HepG2 (cell line): ENCODE measurements at regions of chr18 and their contacts with region 1.

Region 1: DNA sequence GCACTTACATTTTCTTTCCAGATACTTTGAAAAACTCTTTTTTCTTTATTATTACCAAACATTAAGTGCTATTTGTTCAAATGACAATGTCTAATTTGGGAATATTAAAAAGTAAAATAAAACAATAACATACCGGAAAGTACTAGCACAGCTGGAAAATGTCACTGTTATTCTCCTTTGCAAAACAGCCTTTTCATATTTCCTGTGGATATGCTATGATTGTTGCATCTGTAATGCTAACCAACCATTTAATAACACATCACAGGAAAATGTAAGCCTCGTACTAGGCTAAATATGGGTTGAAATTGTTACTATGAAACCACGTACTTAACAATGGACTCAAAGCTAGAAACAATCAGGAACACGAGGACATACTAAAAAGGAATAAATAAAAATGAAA is 298.1 kb downstream of the CBLN2 start:
- DNase-seq: no peak
- ATAC-seq: no peak
- H3K4me3 ChIP-seq: no peak overlapping the region
- H3K27ac ChIP-seq: no peak overlapping the region
- H3K4me1 ChIP-seq: no peaks in the 10 kb centered on the region
- H3K27me3 ChIP-seq: no peaks in the 10 kb centered on the region
- CTCF ChIP-seq: no peak
- EP300 ChIP-seq: no peak
- POLR2A ChIP-seq: no peak
- RAD21 ChIP-seq: no peak

Region 2: DNA sequence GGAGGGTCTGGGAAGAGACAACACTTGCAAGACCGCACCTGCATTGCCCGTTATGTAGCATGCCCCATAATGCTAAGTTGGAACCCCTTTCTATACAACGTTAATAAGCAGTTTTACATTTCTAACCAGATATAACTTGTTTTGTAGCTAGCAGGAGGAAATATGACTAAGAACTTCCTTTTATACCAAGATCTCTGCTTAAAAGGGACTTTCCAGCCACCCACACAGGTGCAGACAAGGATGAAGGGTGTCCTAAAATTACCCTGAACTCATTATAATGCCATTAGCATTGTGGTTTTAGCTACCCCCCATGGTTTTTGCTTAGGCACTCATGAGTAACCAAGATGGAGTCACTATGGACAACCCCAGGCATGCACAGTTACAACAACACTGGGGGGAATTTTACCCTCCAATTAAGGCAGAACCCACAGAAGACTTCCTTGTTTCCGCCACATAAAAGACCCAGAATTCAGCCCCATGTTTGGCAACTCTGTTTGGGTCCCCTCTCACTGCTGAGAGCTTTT is 64.8 kb before region 1 on chr18:
- CTCF ChIA-PET with region 1: no interaction called
- POLR2A ChIA-PET with region 1: no interaction called
- in situ Hi-C with region 1: no loop called
- intact Hi-C with region 1: no loop called
- DNase-seq: no peak
- ATAC-seq: no peak
- H3K4me3 ChIP-seq: no peak overlapping the region
- H3K27ac ChIP-seq: no peak overlapping the region
- H3K4me1 ChIP-seq: no peaks in the 10 kb centered on the region
- H3K27me3 ChIP-seq: no peaks in the 10 kb centered on the region
- CTCF ChIP-seq: no peak
- EP300 ChIP-seq: no peak
- POLR2A ChIP-seq: no peak
- RAD21 ChIP-seq: no peak

Region 3: GRCh38 chr18:73793386-73793785 is 1547.3 kb after region 1 on chr18:
- CTCF ChIA-PET with region 1: no interaction called
- POLR2A ChIA-PET with region 1: no interaction called
- in situ Hi-C with region 1: no loop called
- intact Hi-C with region 1: loop called (anchors 10 kb)
- DNase-seq: no peak
- ATAC-seq: no peak
- H3K4me3 ChIP-seq: no peak overlapping the region
- H3K27ac ChIP-seq: no peak overlapping the region
- H3K4me1 ChIP-seq: no peaks in the 10 kb centered on the region
- H3K27me3 ChIP-seq: peaks cover 0 to 4% of the 10 kb centered on the region in 2 experiments; a peak in 1 of 5 replicates
- CTCF ChIP-seq: no peak
- EP300 ChIP-seq: no peak
- POLR2A ChIP-seq: no peak
- RAD21 ChIP-seq: no peak